Natural killer cell (primary cell): ENCODE measurements at regions of chr4 and their contacts with region 1.

Region 1: DNA sequence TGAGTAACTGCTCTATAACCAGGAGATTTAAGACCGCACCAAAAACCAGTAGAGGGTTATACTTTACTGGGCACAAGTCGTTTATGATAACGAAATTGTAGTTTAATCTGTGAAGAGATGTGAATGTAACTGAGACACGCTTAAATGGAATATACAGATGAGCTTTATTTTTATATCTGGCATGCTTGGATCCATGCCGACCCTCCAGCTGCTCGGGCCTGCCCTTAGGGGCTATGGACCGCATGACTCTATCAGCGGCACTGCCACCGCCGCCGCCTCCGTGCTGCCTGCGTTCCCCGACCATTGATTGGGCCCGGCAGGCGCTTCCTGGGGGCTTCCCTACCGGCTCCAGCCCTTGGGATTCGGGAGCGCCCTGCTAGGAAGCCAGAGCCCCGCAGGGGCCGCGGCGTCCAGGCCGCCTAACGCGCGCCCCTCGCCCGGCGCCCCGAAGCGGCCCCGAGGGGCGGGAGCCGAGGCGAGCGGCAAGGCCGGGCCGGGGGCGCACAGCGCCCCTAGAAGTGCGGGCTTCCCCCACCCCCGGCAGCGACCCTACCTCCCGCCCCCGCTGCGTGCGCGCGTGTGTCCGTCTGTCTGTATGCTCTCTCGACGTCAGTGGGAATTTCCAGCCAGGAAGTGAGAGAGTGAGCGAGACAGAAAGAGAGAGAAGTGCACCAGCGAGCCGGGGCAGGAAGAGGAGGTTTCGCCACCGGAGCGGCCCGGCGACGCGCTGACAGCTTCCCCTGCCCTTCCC is at the start of gene NFKB1:
- DNase-seq: peak; percentile 84 to 96
- ATAC-seq: peak; percentile 71 to 86 (median 78)
- H3K4me3 ChIP-seq: peak within 1 kb of the TSS; percentile 95
- H3K4me3 Mint-ChIP-seq: peak within 1 kb of the TSS; percentile 96
- H3K27ac ChIP-seq: peak within 1 kb of the TSS; percentile 99
- H3K27ac Mint-ChIP-seq: peak within 1 kb of the TSS; percentile 97
- H3K4me1 ChIP-seq: peaks cover 11% of the 10 kb centered on the region
- H3K4me1 Mint-ChIP-seq: peaks cover 36 to 41% of the 10 kb centered on the region in 2 donors
- H3K27me3 ChIP-seq: no peaks in the 10 kb centered on the region
- H3K27me3 Mint-ChIP-seq: peaks cover 0 to 7% of the 10 kb centered on the region in 2 donors
- CTCF ChIP-seq: no peak
- total RNA-seq, gene NFKB1: 144 to 235 (median 163) TPM

Region 2: DNA sequence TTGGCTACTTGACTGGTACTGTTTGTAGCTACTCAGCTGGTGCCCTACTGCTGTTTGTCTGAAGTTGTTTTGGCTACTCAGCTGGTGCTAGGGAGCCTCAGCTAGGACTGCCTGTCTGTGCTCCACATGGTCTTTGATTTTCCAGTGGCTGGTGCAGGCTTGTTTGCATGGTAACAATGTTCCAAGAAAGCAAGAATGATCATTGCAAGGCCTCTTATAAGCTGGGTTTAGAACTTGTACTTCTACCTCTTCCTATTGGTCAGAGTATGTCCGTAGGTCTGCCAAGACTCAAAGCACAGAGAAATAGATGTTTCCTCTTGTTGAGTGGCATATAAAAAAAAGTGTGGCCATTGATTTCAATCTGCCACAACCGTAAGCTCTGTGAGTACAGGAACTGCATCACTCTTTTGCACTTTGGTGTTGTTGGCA is 17.8 kb after region 1 on chr4:
- intact Hi-C with region 1: loop called (anchors 1 kb)
- DNase-seq: peak in 1 of 2 donors; percentile 66
- ATAC-seq: peak; percentile 69 to 84 (median 77)
- H3K4me3 ChIP-seq: no peak overlapping the region
- H3K4me3 Mint-ChIP-seq: peak overlapping the region; percentile 9
- H3K27ac ChIP-seq: peak overlapping the region; percentile 78
- H3K27ac Mint-ChIP-seq: peak overlapping the region; percentile 85 to 86
- H3K4me1 ChIP-seq: peaks cover 5% of the 10 kb centered on the region
- H3K4me1 Mint-ChIP-seq: peaks cover 61 to 82% of the 10 kb centered on the region in 2 donors
- H3K27me3 ChIP-seq: no peaks in the 10 kb centered on the region
- H3K27me3 Mint-ChIP-seq: no peaks in the 10 kb centered on the region
- CTCF ChIP-seq: no peak

Region 3: DNA sequence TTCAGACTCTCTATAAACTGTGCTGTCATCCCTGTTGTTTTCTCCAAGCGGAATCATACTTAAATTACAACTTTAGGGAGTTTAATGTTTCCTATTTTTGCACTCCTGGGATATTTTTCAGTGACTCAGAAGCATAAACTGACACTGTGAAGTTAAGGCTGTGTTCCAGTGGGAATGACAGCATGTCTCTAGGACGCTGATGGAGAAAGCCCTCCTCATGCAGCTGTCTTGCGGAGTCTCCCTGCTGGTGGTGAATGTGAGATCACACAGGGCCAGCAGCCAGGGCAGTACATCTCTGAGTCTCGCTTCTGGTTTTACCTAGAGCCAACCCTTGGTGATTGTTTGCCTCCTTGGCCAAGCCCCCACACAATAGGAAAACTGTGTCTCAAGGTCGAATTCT is 53.6 kb after region 1 on chr4:
- intact Hi-C with region 1: loop called (anchors 2 kb)
- DNase-seq: no peak
- ATAC-seq: no peak
- H3K4me3 ChIP-seq: no peak overlapping the region
- H3K4me3 Mint-ChIP-seq: no peak overlapping the region
- H3K27ac ChIP-seq: no peak overlapping the region
- H3K27ac Mint-ChIP-seq: peak overlapping the region in 1 of 2 donors; percentile 75
- H3K4me1 ChIP-seq: peaks cover under 1% of the 10 kb centered on the region
- H3K4me1 Mint-ChIP-seq: peaks cover 39 to 49% of the 10 kb centered on the region in 2 donors
- H3K27me3 ChIP-seq: no peaks in the 10 kb centered on the region
- H3K27me3 Mint-ChIP-seq: no peaks in the 10 kb centered on the region
- CTCF ChIP-seq: no peak

Region 4: DNA sequence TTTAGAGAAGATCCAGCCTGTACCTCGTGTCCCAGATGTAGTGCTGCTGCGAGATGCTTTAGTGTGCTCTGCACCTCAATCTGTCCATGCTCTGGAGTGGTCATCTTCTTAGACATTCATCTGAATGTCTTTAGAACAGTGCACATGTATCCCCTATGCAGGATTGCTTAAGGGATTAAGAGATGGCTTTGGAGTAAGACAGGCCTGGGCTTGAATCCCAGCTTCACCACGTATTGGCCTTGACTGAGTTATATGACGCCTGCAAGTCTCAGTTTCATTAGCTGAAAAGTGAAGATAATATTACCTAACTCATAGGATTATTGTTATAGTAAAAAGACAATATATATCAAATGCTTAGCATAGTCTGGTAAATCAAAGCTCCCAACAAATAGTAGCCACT is 98.6 kb after region 1 on chr4:
- intact Hi-C with region 1: no loop called
- DNase-seq: no peak
- ATAC-seq: no peak
- H3K4me3 ChIP-seq: no peak overlapping the region
- H3K4me3 Mint-ChIP-seq: no peak overlapping the region
- H3K27ac ChIP-seq: no peak overlapping the region
- H3K27ac Mint-ChIP-seq: peak overlapping the region in 1 of 2 donors; percentile 14
- H3K4me1 ChIP-seq: peaks cover 3% of the 10 kb centered on the region
- H3K4me1 Mint-ChIP-seq: peaks cover 13 to 17% of the 10 kb centered on the region in 2 donors
- H3K27me3 ChIP-seq: no peaks in the 10 kb centered on the region
- H3K27me3 Mint-ChIP-seq: no peaks in the 10 kb centered on the region
- CTCF ChIP-seq: no peak